ENCODE measurements at regions of chr6 and their contacts with region 1.

Region 1: DNA sequence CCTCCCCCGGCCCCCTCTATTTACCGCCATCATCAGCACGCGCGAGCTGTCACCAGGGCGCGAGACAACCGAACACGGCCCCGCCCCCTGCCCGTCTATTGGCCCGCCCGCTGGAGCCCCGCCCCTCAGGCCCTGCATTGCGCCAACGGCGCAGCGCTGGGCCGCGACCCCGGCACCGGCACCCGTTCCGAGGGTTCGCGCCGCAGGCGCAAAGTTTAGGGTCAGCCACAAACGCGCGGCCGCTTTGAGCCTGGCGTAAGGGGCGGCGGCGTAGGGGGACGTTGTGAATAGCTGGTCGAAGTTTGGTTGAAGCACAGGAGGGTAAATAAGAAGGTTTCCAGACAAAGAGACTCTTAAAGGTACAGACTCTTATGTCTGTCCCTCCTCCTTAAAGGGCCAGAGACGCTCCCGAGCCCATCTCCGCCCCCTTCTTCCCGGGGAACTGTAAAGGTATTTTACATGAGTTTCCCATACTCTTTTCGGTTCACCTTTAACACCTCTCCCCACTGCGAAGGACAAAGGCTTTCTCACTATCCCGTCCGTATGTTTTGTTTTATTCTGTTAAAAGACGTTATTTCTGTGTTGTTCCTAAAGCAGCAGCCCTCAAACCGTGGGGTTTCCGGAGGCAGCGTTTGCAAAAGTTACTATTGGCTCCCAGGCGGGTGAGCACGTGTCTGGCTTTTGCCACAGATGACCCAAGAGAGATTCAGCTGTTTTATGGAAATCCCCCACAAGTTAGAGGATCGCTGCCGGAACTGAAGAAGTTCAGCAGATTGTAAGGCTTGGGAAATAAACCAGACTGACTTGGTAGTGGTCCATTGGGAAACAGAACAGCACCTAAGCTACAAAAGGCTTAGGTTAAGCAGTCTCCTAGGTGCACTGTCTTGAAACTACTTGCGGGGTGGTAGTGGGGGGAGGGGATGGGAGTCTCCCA is at the start of gene USP49:
- DNase-seq: peak; percentile 89 to 96
- H3K4me3 ChIP-seq: peak within 1 kb of the TSS; percentile 52
- H3K4me3 Mint-ChIP-seq: no peak within 1 kb of the TSS
- H3K27ac Mint-ChIP-seq: no peak within 1 kb of the TSS
- H3K4me1 ChIP-seq: peaks cover 22% of the 10 kb centered on the region
- H3K4me1 Mint-ChIP-seq: peaks cover 7% of the 10 kb centered on the region
- H3K27me3 ChIP-seq: no peaks in the 10 kb centered on the region
- H3K27me3 Mint-ChIP-seq: no peaks in the 10 kb centered on the region
- CTCF ChIP-seq: no peak
- total RNA-seq, gene USP49: 17.9 and 18.5 TPM in 2 replicates

Region 2: DNA sequence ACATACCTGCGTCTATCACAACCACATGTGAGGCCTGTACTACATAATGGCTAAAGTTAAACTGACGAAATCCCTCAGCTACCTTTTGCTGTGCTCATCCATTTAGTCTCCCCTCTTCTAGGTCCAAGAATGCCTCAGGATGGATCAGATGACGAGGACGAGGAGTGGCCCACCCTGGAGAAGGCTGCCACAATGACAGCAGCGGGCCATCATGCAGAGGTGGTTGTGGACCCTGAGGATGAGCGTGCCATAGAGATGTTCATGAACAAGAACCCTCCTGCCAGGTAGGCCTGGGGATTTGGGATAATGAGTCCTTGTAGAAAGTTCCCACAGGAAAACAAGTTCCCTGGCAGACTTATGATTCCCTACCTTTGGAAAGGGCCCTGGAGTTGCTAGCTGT is 31.7 kb after region 1 on chr6:
- CTCF ChIA-PET with region 1: no interaction called
- POLR2A ChIA-PET with region 1: no interaction called
- intact Hi-C with region 1: no loop called
- DNase-seq: no peak
- H3K4me3 ChIP-seq: no peak overlapping the region
- H3K4me3 Mint-ChIP-seq: no peak overlapping the region
- H3K27ac Mint-ChIP-seq: peak overlapping the region; percentile 32
- H3K4me1 ChIP-seq: peaks cover 7% of the 10 kb centered on the region; the same call in 1 of the 2 replicates
- H3K4me1 Mint-ChIP-seq: peaks cover 13% of the 10 kb centered on the region
- H3K27me3 ChIP-seq: no peaks in the 10 kb centered on the region
- H3K27me3 Mint-ChIP-seq: no peaks in the 10 kb centered on the region
- CTCF ChIP-seq: no peak

Region 3: DNA sequence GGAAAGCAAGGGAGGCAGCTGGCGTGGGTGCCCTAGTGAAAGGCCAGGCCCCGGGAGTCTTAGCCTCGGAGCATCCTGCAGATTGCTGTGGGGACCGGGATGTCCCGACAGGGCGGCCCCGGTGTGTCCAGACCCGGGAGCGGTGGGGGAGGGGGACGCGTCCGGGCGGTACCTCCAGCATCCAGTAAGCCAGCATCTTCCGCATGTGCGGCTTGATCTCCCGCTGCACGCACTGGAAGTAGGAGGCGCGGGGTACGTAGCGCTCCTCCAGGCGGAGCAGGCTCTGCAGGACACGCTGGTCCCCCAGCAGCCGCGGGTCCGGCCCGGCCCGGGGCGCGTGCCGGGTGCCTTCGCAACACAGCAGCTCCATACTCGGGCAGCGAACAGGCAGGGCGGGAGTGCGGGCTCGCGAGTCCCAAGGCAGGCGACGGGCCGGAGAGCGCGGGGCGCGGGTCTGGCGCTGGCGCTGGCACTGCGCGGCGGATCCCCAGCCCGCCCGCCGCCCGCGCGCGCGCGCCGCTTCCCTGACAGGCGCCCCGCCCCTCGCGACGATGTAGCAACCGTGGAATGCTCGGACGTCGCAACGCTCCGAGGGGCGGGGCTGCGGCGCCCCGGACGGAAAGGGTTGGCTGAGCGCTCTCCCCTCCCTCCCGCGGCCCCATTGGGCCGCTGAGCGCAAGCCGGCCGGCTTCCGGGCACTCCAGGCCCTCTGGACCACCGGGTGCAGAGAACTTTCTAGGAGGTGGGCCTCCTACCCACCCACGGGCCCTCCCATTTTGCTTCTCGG is 45.9 kb after region 1 on chr6 and contains the start of gene CCND3:
- CTCF ChIA-PET with region 1: no interaction called
- POLR2A ChIA-PET with region 1: interaction called, 12 read pairs
- intact Hi-C with region 1: no loop called
- DNase-seq: peak; percentile 90 to 93
- H3K4me3 ChIP-seq: peak within 1 kb of the TSS; percentile 94
- H3K4me3 Mint-ChIP-seq: peak within 1 kb of the TSS; percentile 80
- H3K27ac Mint-ChIP-seq: peak within 1 kb of the TSS; percentile 86
- H3K4me1 ChIP-seq: peaks cover 17% of the 10 kb centered on the region
- H3K4me1 Mint-ChIP-seq: peaks cover 17% of the 10 kb centered on the region
- H3K27me3 ChIP-seq: no peaks in the 10 kb centered on the region
- H3K27me3 Mint-ChIP-seq: no peaks in the 10 kb centered on the region
- CTCF ChIP-seq: no peak
- total RNA-seq, gene CCND3: 24.7 and 26.9 TPM in 2 replicates

Measured in Caco-2 (cell line).